AG04450 (cell line): ENCODE measurements at regions of chr1 and their contacts with region 1.

Region 1: GRCh38 chr1:180863158-180863775 is 49.4 kb upstream of the KIAA1614 start:
- DNase-seq: peak; percentile 26
- H3K4me3 ChIP-seq: no peak overlapping the region
- H3K27ac ChIP-seq: no peak overlapping the region
- H3K27me3 ChIP-seq: no peaks in the 10 kb centered on the region
- CTCF ChIP-seq: peak; percentile 62

Region 2: DNA sequence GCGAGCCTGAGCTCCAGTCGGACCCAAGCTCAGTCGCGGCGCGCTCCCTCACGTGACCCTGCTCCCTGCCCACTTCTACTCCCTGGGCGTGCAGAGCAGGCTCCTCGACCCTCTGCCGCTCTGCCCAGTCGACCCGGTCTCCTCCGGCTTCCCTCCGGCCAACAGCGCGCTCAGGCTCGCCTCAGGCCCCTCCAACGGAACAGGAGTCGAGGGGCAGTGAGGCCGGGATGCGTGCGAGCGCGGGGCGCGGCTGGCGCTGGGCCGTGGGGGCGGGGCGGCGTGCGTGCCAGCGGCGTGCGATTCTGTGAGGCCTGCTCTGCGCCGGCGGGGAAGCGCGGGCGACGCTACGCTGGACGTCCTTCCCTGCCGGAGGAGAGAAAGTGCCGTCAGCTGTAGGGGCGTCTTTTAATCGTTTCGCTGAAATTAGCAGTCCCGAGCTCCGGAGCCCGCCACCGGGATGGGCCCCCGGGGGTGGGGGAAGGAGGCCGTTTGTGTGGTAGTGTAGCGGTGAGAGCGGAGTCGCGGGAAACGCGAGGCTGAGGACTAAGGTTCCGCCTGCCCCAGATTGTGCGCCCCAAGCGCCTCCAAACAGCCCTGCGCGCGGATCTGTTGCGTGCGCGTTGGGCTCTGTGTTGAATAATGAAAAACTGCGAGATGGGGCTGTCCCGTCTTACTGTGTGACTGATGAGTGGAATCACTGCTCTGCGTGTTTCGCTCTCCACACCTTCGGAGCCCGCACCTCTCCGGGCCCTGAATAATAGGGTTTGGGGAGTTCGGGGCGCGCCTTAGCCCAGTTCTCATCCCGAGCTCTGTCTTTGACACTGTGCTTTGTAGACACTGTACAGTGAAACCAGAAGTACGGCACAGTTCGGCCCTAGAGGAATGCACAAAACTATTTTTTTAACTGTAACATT is 360.6 kb before region 1 on chr1 and contains the start of gene ACBD6:
- CTCF ChIA-PET with region 1: interaction called, 14 read pairs
- POLR2A ChIA-PET with region 1: no interaction called
- DNase-seq: no peak
- H3K4me3 ChIP-seq: peak within 1 kb of the TSS; percentile 94
- H3K27ac ChIP-seq: peak within 1 kb of the TSS; percentile 94
- H3K27me3 ChIP-seq: no peaks in the 10 kb centered on the region
- CTCF ChIP-seq: peak; percentile 30
- polyA plus RNA-seq, gene ACBD6: 84.1 and 87.6 TPM in 2 replicates

Region 3: DNA sequence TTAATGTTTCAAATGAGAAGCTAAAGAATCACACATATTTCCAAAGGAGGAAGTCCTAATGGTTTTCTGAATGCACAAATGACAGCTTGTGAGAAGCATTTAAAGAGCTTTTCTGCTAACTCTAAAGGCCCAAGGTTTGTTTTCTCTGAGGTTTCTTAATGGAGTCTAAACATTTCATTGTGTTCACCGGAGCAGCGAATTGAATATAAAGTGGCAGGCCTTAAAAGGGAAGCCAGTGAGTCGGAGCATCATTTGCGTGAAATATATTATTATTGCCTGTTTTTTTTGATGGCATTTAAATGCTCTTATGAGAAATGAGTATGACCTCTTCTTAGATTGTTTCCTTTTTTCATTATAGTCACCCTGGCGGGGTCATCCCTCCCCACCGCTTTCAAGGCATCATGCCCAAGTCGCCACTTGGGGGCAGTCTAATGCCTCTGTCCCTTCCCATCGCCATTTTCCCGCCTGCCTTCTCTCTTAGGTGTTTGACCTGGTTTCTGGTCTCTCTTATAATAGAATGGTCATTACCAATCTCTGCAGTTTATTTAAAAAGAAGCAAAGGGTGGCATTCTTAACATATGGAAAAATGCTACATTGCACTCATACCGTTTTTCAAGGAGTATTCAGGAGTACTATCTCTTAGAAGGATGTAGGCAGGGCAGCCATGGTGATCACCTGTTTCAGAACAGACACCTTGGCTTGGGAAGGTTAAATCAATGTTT is 329.8 kb before region 1 on chr1:
- CTCF ChIA-PET with region 1: interaction called, 93 read pairs
- POLR2A ChIA-PET with region 1: no interaction called
- DNase-seq: no peak
- H3K4me3 ChIP-seq: no peak overlapping the region
- H3K27ac ChIP-seq: no peak overlapping the region
- H3K27me3 ChIP-seq: no peaks in the 10 kb centered on the region
- CTCF ChIP-seq: peak; percentile 88

Region 4: GRCh38 chr1:180539136-180539535 is 324.1 kb before region 1 on chr1:
- CTCF ChIA-PET with region 1: interaction called, 93 read pairs
- POLR2A ChIA-PET with region 1: no interaction called
- DNase-seq: no peak
- H3K4me3 ChIP-seq: no peak overlapping the region
- H3K27ac ChIP-seq: no peak overlapping the region
- H3K27me3 ChIP-seq: no peaks in the 10 kb centered on the region
- CTCF ChIP-seq: no peak

Region 5: GRCh38 chr1:180631766-180632325 is 231.4 kb before region 1 on chr1 and contains the start of gene XPR1:
- CTCF ChIA-PET with region 1: interaction called, 59 read pairs
- POLR2A ChIA-PET with region 1: interaction called, 3 read pairs
- DNase-seq: peak; percentile 98
- H3K4me3 ChIP-seq: peak within 1 kb of the TSS; percentile 95
- H3K27ac ChIP-seq: peak within 1 kb of the TSS; percentile 68
- H3K27me3 ChIP-seq: no peaks in the 10 kb centered on the region
- CTCF ChIP-seq: peak; percentile 30; the same call in 1 of the 2 replicates
- polyA plus RNA-seq, gene XPR1: 53.0 and 63.2 TPM in 2 replicates

Region 6: DNA sequence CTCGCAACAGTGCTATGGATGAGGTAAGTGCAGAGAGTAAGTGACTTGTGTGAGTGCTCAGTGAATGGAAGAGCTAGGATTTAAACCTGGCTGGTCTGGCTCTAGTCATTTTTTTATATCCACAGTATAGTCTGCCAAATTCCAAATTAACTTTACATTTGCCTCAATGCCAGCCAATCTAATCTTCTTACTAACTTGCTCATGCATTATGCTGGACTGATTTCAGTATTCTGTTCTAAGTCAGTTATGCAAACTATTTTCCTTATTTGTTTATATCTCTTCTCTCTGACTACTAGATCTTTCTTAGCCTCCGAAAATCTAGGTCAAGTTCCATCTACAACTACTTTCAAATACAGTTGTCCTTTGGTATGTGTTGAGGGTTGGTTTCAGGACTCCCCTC is 98.1 kb before region 1 on chr1:
- CTCF ChIA-PET with region 1: no interaction called
- POLR2A ChIA-PET with region 1: no interaction called
- DNase-seq: peak; percentile 38
- H3K4me3 ChIP-seq: no peak overlapping the region
- H3K27ac ChIP-seq: no peak overlapping the region
- H3K27me3 ChIP-seq: no peaks in the 10 kb centered on the region
- CTCF ChIP-seq: no peak

Region 7: GRCh38 chr1:180881806-180882509 is 18.7 kb after region 1 on chr1:
- CTCF ChIA-PET with region 1: interaction called, 13 read pairs
- POLR2A ChIA-PET with region 1: no interaction called
- DNase-seq: no peak
- H3K4me3 ChIP-seq: no peak overlapping the region
- H3K27ac ChIP-seq: no peak overlapping the region
- H3K27me3 ChIP-seq: no peaks in the 10 kb centered on the region
- CTCF ChIP-seq: peak; percentile 60